H1 (cell line): ENCODE measurements at regions of chr17 and their contacts with region 1.

Region 1: GRCh38 chr17:64281962-64282727 is 19.1 kb upstream of the TEX2 start:
- DNase-seq: peak in 1 of 2 experiments; percentile 62
- H3K4me3 ChIP-seq: no peak overlapping the region
- H3K27ac ChIP-seq: no peak overlapping the region
- H3K4me1 ChIP-seq: no peaks in the 10 kb centered on the region
- H3K27me3 ChIP-seq: no peaks in the 10 kb centered on the region
- CTCF ChIP-seq: peak; percentile 50 to 90 (median 61)
- EP300 ChIP-seq: no peak
- POLR2A ChIP-seq: no peak
- RAD21 ChIP-seq: peak; percentile 91

Region 2: GRCh38 chr17:64216338-64217248 is 65.6 kb before region 1 on chr17:
- CTCF ChIA-PET with region 1: interaction called, 12 read pairs
- POLR2A ChIA-PET with region 1: no interaction called
- DNase-seq: peak in 1 of 2 experiments; percentile 55
- H3K4me3 ChIP-seq: no peak overlapping the region
- H3K27ac ChIP-seq: no peak overlapping the region; the same call in 1 of the 2 replicates
- H3K4me1 ChIP-seq: peaks cover 0 to 8% (median 6%) of the 10 kb centered on the region in 4 experiments; a peak in 6 of 7 replicates
- H3K27me3 ChIP-seq: no peaks in the 10 kb centered on the region
- CTCF ChIP-seq: peak; percentile 35 to 54 (median 46)
- EP300 ChIP-seq: no peak
- POLR2A ChIP-seq: no peak
- RAD21 ChIP-seq: peak; percentile 25 to 39; a peak in 2 of 4 replicates

Region 3: GRCh38 chr17:64250233-64250835 is 31.8 kb before region 1 on chr17:
- CTCF ChIA-PET with region 1: interaction called, 13 read pairs
- POLR2A ChIA-PET with region 1: interaction called, 3 read pairs
- DNase-seq: no peak
- H3K4me3 ChIP-seq: no peak overlapping the region
- H3K27ac ChIP-seq: no peak overlapping the region
- H3K4me1 ChIP-seq: peaks cover 0 to 3% (median 1%) of the 10 kb centered on the region in 4 experiments; a peak in 1 of 7 replicates
- H3K27me3 ChIP-seq: no peaks in the 10 kb centered on the region
- CTCF ChIP-seq: no peak
- EP300 ChIP-seq: no peak
- POLR2A ChIP-seq: no peak
- RAD21 ChIP-seq: no peak

Region 4: DNA sequence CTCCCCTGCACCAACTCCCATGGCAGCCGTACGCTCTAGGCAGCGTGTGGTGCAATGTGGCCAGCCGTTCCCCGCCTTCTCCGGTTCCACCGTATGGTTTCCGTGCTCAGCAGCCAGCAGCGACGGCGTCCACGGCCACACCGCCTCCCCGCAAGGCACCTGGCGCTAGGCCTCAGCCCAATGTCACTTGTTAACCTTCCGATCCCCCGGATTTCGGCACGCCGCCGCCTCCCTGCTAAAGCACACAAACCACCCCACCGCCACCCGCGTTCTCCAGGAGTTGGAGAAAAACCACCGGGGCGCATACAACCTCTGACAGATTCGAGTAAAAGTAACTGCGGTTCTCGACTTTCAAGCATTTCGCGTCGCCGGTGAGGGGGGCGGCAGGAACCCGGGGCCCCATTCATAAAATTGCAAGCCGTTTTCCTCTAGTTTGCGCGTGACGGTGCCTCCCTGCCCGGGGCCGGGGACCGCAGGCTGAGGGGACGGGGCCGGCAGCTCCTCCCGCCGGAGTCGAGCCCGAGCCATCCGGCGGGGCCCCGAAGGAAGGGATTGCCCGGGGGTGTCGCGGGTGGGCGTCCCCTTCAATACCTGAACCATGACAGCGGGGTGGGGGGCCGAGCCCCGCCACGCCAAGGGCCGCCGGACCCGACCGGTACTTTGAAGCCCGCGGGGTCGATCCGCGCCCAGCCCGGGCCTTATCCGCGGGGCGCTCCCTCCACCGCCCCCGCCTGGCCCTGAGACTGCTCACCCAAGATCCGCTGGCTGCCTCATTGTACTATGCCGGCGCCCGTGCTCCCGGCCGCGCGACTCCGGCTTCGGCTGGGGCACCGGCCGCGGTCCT is 19.5 kb before region 1 on chr17 and contains the start of gene TEX2:
- CTCF ChIA-PET with region 1: interaction called, 16 read pairs
- POLR2A ChIA-PET with region 1: no interaction called
- DNase-seq: peak in 1 of 2 experiments; percentile 54
- H3K4me3 ChIP-seq: peak within 1 kb of the TSS; percentile 72 to 97 (median 84)
- H3K27ac ChIP-seq: peak within 1 kb of the TSS; percentile 94
- H3K4me1 ChIP-seq: peaks cover 1 to 5% (median 4%) of the 10 kb centered on the region in 4 experiments; a peak in 4 of 7 replicates
- H3K27me3 ChIP-seq: peaks cover 0 to 9% (median 8%) of the 10 kb centered on the region in 4 experiments; a peak in 4 of 7 replicates
- CTCF ChIP-seq: no peak
- EP300 ChIP-seq: no peak
- POLR2A ChIP-seq: no peak
- RAD21 ChIP-seq: no peak
- total RNA-seq, gene TEX2: 15.6 and 16.3 TPM in 2 replicates

Region 5: DNA sequence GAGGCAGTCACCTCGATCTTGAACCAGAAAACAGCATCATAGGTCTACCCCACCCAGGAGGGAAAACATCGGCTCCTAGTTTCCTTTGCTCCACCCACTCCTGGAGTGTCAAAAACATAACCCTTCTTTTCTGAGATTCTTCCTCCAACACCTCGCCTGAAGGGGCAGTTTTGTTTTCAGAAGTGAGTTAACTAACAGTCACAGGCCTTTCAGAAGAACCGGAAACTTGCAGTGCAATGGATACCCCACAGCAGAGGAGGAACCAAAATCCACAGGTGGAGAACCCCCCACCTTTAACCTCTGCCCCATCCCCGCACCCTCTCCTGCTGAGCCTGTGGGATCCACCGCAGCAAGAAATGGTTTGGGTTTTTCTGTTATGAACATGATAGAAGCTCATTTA is 11.3 kb before region 1 on chr17:
- CTCF ChIA-PET with region 1: interaction called, 27 read pairs
- POLR2A ChIA-PET with region 1: no interaction called
- DNase-seq: no peak
- H3K4me3 ChIP-seq: no peak overlapping the region
- H3K27ac ChIP-seq: no peak overlapping the region
- H3K4me1 ChIP-seq: peaks cover 0 to 3% (median 0%) of the 10 kb centered on the region in 4 experiments; a peak in 1 of 7 replicates
- H3K27me3 ChIP-seq: no peaks in the 10 kb centered on the region
- CTCF ChIP-seq: no peak
- EP300 ChIP-seq: no peak
- POLR2A ChIP-seq: no peak
- RAD21 ChIP-seq: no peak

Region 6: DNA sequence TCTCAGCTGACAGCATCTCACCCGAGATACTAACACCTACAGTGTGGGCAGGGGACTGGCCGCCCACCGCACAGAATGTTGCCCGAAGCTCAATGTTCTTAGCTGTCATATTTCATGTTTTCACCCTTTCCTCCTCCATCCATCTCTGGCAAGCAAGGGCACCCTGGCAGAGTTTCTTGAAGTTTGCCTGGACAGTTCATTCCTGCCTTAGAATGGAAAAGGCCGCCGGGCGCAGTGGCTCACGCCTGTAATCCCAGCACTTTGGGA is 18.5 kb after region 1 on chr17:
- CTCF ChIA-PET with region 1: interaction called, 21 read pairs
- POLR2A ChIA-PET with region 1: interaction called, 3 read pairs
- DNase-seq: no peak
- H3K4me3 ChIP-seq: no peak overlapping the region
- H3K27ac ChIP-seq: no peak overlapping the region
- H3K4me1 ChIP-seq: no peaks in the 10 kb centered on the region
- H3K27me3 ChIP-seq: no peaks in the 10 kb centered on the region
- CTCF ChIP-seq: no peak
- EP300 ChIP-seq: no peak
- POLR2A ChIP-seq: no peak
- RAD21 ChIP-seq: no peak

Region 7: DNA sequence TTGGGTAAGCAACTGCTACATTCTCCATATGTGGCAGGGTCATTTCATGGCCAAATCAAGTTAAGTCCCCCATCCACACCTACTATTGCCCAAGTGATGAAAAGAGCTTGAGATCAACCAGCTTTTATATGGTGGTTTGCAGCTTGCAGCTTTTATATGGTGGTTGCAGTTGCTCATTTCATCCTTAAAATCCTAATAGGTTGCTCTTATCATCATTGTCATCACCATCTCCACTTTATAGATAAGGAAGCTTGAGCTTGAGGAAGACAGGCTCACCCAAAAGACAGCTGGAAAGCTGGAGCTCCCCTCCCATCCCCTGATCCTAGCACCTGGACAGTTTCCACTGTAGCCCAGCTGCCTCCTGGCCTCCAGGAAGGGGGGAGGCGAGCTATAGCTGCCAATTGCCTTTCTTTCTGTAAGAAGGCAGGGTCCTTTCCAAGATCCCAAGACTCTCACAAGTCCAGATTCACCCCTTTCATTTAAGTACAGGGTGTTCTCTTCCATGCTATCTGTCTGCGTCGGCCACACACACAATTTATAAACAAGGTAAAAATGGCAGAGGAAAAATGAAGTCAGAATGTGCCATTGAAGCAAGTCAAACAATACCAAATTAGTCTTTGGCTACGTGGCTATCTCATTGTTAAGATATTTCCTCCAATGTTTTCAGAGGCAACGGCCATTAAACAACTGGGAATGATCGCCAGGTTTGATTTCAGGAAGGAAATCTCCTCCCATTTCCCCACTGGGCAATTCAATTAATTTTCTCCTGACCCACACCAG is 45.2 kb after region 1 on chr17:
- CTCF ChIA-PET with region 1: no interaction called
- POLR2A ChIA-PET with region 1: no interaction called
- DNase-seq: no peak
- H3K4me3 ChIP-seq: no peak overlapping the region
- H3K27ac ChIP-seq: no peak overlapping the region
- H3K4me1 ChIP-seq: 0 out of 7 replicates have a peak, but pooled peaks cover 0 to 2% (median 0%) of the 10 kb centered on the region in 4 experiments
- H3K27me3 ChIP-seq: no peaks in the 10 kb centered on the region
- CTCF ChIP-seq: no peak
- EP300 ChIP-seq: no peak
- POLR2A ChIP-seq: no peak
- RAD21 ChIP-seq: no peak

Region 8: DNA sequence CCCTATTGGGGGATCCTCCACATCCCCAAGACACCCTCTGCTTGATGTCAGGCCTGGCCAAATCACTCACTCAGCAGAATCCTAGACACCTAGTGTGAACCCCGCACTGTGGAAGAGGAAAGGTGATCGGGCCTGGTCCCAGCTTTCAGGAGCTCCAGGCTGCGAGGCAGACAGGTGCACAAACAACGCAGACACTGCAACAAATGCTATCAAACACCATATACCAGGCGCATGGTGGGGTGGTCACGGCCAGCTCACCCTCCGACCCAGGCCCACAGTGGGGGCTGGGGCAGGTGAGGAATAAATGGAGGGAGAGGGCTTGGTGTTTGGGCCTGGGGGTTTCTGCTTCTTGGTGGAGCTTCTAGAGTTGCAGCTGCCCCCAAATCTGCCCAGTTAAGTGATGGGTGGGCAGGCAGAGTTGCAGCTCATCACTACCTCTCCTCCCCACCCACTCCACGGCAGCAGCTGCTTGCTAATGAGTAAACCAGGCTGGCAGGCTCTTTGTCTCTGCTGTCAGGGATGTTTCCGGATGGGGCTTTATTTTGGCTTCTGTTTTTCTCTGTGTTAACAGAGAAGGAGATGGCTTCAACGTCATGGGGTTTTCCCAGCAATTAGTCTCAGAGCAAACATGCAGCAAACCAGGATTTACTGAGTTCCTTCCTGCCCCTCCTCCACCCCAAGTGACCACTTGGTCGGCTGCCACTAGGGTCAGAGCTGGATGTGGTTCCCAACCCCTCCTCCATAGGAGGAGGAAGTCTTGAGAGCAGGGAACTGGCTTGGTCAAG is 61.9 kb after region 1 on chr17:
- CTCF ChIA-PET with region 1: no interaction called
- POLR2A ChIA-PET with region 1: no interaction called
- DNase-seq: no peak
- H3K4me3 ChIP-seq: no peak overlapping the region
- H3K27ac ChIP-seq: no peak overlapping the region
- H3K4me1 ChIP-seq: peaks cover 0 to 5% (median 2%) of the 10 kb centered on the region in 4 experiments; a peak in 3 of 7 replicates
- H3K27me3 ChIP-seq: peaks cover 0 to 3% (median under 1%) of the 10 kb centered on the region in 4 experiments; a peak in 4 of 7 replicates
- CTCF ChIP-seq: no peak
- EP300 ChIP-seq: no peak
- POLR2A ChIP-seq: no peak
- RAD21 ChIP-seq: no peak

Region 9: DNA sequence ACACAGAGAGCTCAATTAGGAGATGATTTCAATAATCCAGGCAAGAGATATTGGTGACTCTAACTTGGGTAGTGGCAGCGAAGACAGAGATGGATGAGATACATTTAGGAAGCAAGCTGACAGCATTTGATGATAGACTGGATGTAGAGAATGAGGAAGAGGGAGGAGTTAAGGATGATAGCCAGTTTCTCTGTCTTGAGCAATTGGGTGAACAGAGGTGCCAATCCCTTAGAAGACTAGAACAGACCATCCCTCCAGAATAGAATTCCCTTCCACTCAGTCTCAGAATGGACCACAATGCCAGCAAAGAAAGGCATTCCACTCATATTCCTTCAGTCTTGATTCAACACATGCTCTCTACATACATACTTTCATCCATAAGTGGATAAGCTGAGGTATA is 197.5 kb after region 1 on chr17:
- CTCF ChIA-PET with region 1: no interaction called
- POLR2A ChIA-PET with region 1: no interaction called
- DNase-seq: no peak
- H3K4me3 ChIP-seq: no peak overlapping the region
- H3K27ac ChIP-seq: no peak overlapping the region
- H3K4me1 ChIP-seq: no peaks in the 10 kb centered on the region
- H3K27me3 ChIP-seq: no peaks in the 10 kb centered on the region
- CTCF ChIP-seq: no peak
- EP300 ChIP-seq: no peak
- POLR2A ChIP-seq: no peak
- RAD21 ChIP-seq: no peak

Region 10: DNA sequence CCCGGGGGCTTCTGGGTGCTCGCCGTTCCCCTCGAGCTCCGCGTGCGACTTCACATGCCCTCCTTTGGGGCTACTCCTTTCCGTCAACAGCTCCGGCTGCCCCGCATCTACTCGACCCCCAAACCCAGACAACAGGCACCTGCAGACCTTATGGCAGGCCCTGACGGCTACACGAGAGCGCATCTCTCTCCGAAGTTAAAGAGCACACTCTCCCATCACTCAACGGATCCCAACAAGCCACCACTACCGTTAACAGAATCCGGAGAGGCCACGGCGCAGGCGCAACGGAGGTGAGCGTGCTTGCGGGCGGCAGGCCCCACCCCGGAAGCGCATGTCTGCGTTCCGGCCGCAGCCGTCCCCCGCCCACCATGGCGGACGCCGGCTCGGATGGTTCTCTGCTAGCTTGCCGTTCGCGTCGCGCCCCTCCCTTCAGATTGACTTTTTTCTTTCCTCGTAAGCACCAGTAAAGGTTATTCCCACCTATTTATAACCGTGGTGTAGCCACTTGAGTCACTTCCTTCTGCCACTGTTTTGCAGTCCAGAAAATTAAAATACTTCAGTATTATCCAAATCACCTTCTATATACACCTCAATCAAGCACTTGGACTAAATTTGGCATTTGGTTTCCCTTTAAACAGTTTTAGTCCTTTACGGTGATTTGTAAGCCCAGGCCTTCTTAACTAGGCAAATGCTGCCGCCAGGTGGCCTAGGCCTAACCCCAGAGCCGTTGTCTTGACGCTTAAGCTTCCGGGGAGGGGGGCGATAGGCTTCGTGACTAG is 214.8 kb after region 1 on chr17 and contains the start of gene POLG2:
- CTCF ChIA-PET with region 1: no interaction called
- POLR2A ChIA-PET with region 1: no interaction called
- DNase-seq: peak; percentile 73 to 94
- H3K4me3 ChIP-seq: peak within 1 kb of the TSS; percentile 67 to 92 (median 80)
- H3K27ac ChIP-seq: peak within 1 kb of the TSS; percentile 85
- H3K4me1 ChIP-seq: peaks cover 0 to 7% (median 3%) of the 10 kb centered on the region in 4 experiments; a peak in 5 of 7 replicates
- H3K27me3 ChIP-seq: no peaks in the 10 kb centered on the region
- CTCF ChIP-seq: peak; percentile 33 to 65 (median 51); a peak in 3 of 4 replicates
- EP300 ChIP-seq: no peak
- POLR2A ChIP-seq: peak; percentile 55 to 87
- RAD21 ChIP-seq: peak; percentile 38 to 41; a peak in 3 of 4 replicates
- total RNA-seq, gene POLG2: 30.9 and 34.3 TPM in 2 replicates